ENCODE measurements at regions of chr1 and their contacts with region 1.

Region 1: DNA sequence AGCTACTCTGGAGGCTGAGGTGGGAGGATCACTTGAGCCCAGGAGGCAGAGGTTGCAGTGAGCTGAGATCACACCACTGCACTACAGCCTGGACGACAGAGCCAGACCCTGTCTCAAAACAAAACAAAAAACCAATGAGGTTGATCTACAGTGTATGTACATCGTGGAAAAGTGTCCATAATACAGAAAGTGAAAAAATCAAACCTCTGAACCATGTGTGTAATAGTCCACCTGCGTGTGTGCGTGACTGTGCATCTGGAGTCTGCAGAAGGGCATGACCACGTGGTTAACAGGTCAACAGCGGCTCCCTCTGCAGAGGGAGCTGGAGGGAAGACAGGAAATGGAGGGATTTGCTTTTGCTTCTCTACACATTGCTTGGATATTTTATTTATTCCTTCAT is 32.4 kb upstream of the ENO1 start:
- DNase-seq: no peak
- ATAC-seq: no peak; the same call in 1 of the 2 replicates
- H3K4me3 ChIP-seq: no peak overlapping the region
- H3K27ac ChIP-seq: no peak overlapping the region
- H3K4me1 ChIP-seq: peaks cover 2% of the 10 kb centered on the region
- H3K27me3 ChIP-seq: no peaks in the 10 kb centered on the region
- CTCF ChIP-seq: no peak

Region 2: GRCh38 chr1:8494681-8495080 is 416.2 kb before region 1 on chr1:
- CTCF ChIA-PET with region 1: no interaction called
- POLR2A ChIA-PET with region 1: no interaction called
- intact Hi-C with region 1: no loop called
- DNase-seq: no peak
- ATAC-seq: no peak
- H3K4me3 ChIP-seq: no peak overlapping the region
- H3K27ac ChIP-seq: no peak overlapping the region
- H3K4me1 ChIP-seq: peaks cover 15% of the 10 kb centered on the region
- H3K27me3 ChIP-seq: no peaks in the 10 kb centered on the region
- CTCF ChIP-seq: no peak

Region 3: GRCh38 chr1:8878448-8879347 is 32.2 kb before region 1 on chr1 and contains the start of gene ENO1:
- CTCF ChIA-PET with region 1: interaction called, 3 read pairs
- POLR2A ChIA-PET with region 1: no interaction called
- intact Hi-C with region 1: loop called (anchors 5 kb)
- DNase-seq: peak; percentile 97
- ATAC-seq: peak; percentile 62
- H3K4me3 ChIP-seq: peak within 1 kb of the TSS; percentile 95
- H3K27ac ChIP-seq: peak within 1 kb of the TSS; percentile 97
- H3K4me1 ChIP-seq: peaks cover 39% of the 10 kb centered on the region
- H3K27me3 ChIP-seq: no peaks in the 10 kb centered on the region
- CTCF ChIP-seq: no peak
- total RNA-seq, gene ENO1: 3,669 and 3,712 TPM in 2 replicates

Region 4: DNA sequence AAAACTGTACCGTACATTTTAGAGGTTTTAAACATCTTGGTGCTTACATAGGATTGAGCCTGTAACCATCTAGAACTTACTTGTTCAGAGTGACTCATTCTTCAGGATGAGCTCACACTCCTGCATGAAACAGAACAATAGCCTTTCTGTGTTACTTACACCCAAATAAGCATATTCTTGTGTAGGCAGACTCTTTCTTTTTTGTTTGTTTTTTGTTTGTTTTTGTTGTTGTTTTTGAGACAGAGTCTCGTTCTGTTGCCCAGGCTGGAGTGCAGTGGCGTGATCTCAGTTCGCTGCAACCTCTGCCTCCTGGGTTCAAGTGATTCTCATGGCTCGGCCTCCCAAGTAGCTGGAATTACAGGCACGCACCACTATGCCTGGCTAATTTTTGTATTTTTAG is 31.0 kb after region 1 on chr1:
- CTCF ChIA-PET with region 1: no interaction called
- POLR2A ChIA-PET with region 1: no interaction called
- intact Hi-C with region 1: no loop called
- DNase-seq: peak; percentile 79
- ATAC-seq: peak; percentile 95
- H3K4me3 ChIP-seq: no peak overlapping the region
- H3K27ac ChIP-seq: peak overlapping the region; percentile 51
- H3K4me1 ChIP-seq: peaks cover 25% of the 10 kb centered on the region
- H3K27me3 ChIP-seq: no peaks in the 10 kb centered on the region
- CTCF ChIP-seq: no peak

Region 5: DNA sequence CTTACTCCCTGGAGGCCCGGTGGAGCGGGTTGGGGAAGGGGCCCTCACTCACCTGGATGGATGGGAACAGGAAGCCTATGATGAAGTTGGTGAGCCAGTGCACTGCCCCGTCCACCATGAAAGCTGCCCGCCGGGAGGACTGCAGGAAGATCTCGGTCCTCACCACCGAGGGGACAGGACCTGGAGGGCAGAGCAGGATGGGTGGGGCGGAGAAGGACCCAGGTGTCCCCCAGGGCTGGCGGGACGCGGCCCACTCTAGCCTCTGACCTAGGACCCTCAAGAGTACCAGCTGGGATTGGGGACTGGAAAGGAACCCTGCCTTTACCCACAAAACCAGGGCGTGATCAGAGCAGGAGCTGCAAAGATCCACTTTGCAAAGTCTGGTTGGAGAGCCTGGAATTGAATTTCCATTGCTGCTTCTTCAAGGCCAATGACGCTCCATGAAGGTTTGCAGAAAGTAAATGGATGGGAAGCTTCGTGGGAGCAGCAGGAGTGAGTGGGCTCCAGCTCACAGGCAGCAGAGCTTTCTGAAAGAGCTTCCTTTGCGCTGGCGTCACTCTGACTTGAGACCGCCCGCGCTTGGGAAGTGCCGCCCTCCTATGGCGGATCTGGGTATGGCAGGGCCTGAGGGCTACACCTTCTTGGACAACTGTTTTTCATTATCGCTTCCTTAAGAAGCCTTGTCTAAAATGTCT is 93.9 kb after region 1 on chr1:
- CTCF ChIA-PET with region 1: interaction called, 11 read pairs
- POLR2A ChIA-PET with region 1: no interaction called
- intact Hi-C with region 1: no loop called
- DNase-seq: peak; percentile 84
- ATAC-seq: peak; percentile 86
- H3K4me3 ChIP-seq: no peak overlapping the region
- H3K27ac ChIP-seq: no peak overlapping the region
- H3K4me1 ChIP-seq: no peaks in the 10 kb centered on the region
- H3K27me3 ChIP-seq: no peaks in the 10 kb centered on the region
- CTCF ChIP-seq: peak; percentile 92

Region 6: DNA sequence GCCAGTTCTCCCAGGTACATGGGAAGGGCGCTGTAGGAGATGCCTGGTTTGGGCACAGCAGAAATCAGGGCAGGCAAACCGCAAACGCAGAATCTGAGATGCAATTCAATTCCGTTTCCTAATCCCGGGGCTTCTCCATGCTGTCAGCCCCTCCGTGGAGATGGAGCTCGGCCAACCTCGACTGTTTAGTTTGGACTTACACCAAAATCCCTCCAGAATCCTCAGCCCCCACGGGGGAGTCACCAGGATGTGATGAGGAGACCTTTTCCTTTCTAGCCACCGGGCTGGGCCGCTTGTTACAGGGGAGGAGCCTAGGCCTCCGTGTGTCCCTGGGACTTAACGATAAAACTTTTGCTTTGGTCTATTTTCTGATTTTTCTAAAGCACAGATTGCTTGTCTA is 107.4 kb after region 1 on chr1:
- CTCF ChIA-PET with region 1: no interaction called
- POLR2A ChIA-PET with region 1: no interaction called
- intact Hi-C with region 1: no loop called
- DNase-seq: no peak
- ATAC-seq: no peak
- H3K4me3 ChIP-seq: no peak overlapping the region
- H3K27ac ChIP-seq: no peak overlapping the region
- H3K4me1 ChIP-seq: no peaks in the 10 kb centered on the region
- H3K27me3 ChIP-seq: no peaks in the 10 kb centered on the region
- CTCF ChIP-seq: no peak

Region 7: DNA sequence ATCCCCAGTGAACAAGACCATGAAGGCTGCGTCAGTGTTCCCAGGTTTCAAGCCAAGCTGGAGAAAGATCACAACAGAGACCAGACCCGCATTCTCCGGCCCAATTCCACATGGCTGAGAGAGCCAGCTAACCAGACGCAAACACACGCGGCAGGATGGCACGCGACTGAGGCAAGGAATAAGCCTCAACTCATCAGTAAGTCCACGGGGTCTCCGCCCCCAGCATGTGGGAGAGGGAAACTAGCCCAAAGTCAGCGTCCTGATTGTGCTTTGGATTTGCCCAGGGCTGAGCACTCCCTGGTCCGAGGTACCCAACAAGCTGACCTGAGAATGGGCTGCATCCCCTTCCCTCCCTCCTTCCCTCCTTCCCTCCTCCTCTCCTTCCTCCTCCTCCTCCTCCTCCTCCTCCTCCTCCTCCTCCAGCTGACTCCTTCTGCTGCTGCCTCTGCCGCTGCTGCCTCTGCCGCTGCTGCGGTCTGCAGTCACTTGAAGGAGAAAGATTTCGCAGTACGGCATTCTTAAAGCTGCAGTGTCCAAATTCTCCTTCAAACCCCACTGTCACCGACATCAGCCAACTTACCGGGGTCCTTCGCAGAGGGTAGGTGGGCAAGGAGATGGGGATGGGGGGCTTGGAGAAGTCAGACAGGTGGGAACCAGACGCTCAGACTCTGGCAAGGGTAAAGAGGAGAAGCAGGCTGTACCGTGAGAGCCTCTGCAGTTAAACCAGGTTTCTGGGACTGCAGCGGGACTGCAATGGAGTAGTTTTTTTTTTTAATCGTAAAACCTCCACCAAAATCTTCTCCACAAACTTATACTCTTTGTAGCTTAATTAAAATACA is 290.7 kb after region 1 on chr1:
- CTCF ChIA-PET with region 1: no interaction called
- POLR2A ChIA-PET with region 1: no interaction called
- intact Hi-C with region 1: loop called (anchors 5 kb)
- DNase-seq: peak; percentile 43
- ATAC-seq: peak; percentile 72
- H3K4me3 ChIP-seq: peak overlapping the region; percentile 73
- H3K27ac ChIP-seq: no peak overlapping the region
- H3K4me1 ChIP-seq: peaks cover 23% of the 10 kb centered on the region
- H3K27me3 ChIP-seq: peaks cover 27% of the 10 kb centered on the region
- CTCF ChIP-seq: no peak

Region 8: GRCh38 chr1:9558271-9558945 is 647.5 kb after region 1 on chr1:
- CTCF ChIA-PET with region 1: interaction called, 15 read pairs
- POLR2A ChIA-PET with region 1: interaction called, 14 read pairs
- intact Hi-C with region 1: no loop called
- DNase-seq: no peak
- ATAC-seq: no peak
- H3K4me3 ChIP-seq: no peak overlapping the region
- H3K27ac ChIP-seq: no peak overlapping the region
- H3K4me1 ChIP-seq: peaks cover 27% of the 10 kb centered on the region
- H3K27me3 ChIP-seq: no peaks in the 10 kb centered on the region
- CTCF ChIP-seq: no peak